B cell (primary cell): ENCODE measurements at regions of chr4 and their contacts with region 1.

Region 1: GRCh38 chr4:94277534-94277933 is 65.1 kb downstream of the HPGDS start:
- DNase-seq: no peak
- ATAC-seq: no peak
- H3K4me3 ChIP-seq: no peak overlapping the region
- H3K4me3 Mint-ChIP-seq: no peak overlapping the region
- H3K27ac ChIP-seq: no peak overlapping the region
- H3K27ac Mint-ChIP-seq: no peak overlapping the region
- H3K4me1 ChIP-seq: no peaks in the 10 kb centered on the region
- H3K4me1 Mint-ChIP-seq: no peaks in the 10 kb centered on the region
- H3K27me3 ChIP-seq: no peaks in the 10 kb centered on the region
- H3K27me3 Mint-ChIP-seq: no peaks in the 10 kb centered on the region
- CTCF ChIP-seq: no peak

Region 2: DNA sequence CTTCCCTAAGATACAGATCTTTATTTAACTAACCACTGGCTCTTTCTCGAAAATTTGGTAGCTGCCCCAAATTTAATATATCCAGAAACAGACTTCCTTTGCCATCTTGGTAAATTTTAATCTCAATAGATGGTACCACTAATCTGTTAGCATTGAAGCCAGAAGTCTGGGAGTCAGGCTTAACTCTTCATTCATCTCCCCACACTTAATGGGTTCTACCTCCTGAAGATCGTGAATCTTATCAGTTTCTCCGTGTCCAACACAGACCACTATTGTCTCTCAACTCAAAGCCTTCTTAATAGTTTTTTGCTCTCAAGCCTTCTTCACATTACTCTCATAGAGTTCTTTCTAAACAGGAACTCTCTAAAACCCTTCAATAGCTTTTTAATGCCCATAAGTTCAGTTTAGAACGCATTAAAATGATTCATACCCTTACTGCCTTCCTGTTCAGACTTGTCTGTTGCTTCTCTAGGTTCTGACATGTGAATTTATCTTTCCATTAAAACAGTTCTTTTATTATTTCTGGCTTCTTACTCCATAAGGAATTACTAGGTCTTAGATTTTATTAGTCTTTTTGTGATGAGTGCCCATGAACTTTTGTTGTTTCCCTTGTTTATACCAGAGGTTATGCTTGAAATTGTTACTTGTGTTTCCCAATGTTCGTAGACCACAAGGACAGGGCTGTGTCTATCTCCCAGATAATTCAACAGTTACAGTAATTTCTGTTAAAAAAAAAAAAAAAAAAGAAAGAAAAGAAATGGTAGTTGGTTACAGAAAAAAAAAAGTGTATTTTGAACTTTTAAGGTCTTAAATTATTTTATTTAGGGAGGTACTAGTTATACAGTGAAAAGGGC is 15.1 kb before region 1 on chr4:
- CTCF ChIA-PET with region 1: no interaction called
- POLR2A ChIA-PET with region 1: no interaction called
- intact Hi-C with region 1: no loop called
- DNase-seq: no peak
- ATAC-seq: no peak
- H3K4me3 ChIP-seq: no peak overlapping the region
- H3K4me3 Mint-ChIP-seq: no peak overlapping the region
- H3K27ac ChIP-seq: no peak overlapping the region
- H3K27ac Mint-ChIP-seq: no peak overlapping the region
- H3K4me1 ChIP-seq: no peaks in the 10 kb centered on the region
- H3K4me1 Mint-ChIP-seq: no peaks in the 10 kb centered on the region
- H3K27me3 ChIP-seq: no peaks in the 10 kb centered on the region
- H3K27me3 Mint-ChIP-seq: no peaks in the 10 kb centered on the region
- CTCF ChIP-seq: no peak

Region 3: GRCh38 chr4:94290245-94290644 is 12.7 kb after region 1 on chr4:
- CTCF ChIA-PET with region 1: no interaction called
- POLR2A ChIA-PET with region 1: no interaction called
- intact Hi-C with region 1: loop called (anchors 2 kb)
- DNase-seq: no peak
- ATAC-seq: no peak
- H3K4me3 ChIP-seq: no peak overlapping the region
- H3K4me3 Mint-ChIP-seq: no peak overlapping the region
- H3K27ac ChIP-seq: no peak overlapping the region
- H3K27ac Mint-ChIP-seq: no peak overlapping the region
- H3K4me1 ChIP-seq: no peaks in the 10 kb centered on the region
- H3K4me1 Mint-ChIP-seq: no peaks in the 10 kb centered on the region
- H3K27me3 ChIP-seq: no peaks in the 10 kb centered on the region
- H3K27me3 Mint-ChIP-seq: no peaks in the 10 kb centered on the region
- CTCF ChIP-seq: no peak